Head of caudate nucleus (tissue), 42 donors: ENCODE measurements at regions of chr2 and their contacts with region 1.

Region 1: GRCh38 chr2:168346725-168347477 is 99.5 kb upstream of the STK39 start:
- DNase-seq: peak; percentile 24 to 92 (median 76)

Region 2: GRCh38 chr2:168573128-168573903 is 226.4 kb after region 1 on chr2:
- intact Hi-C with region 1: no loop called
- DNase-seq: no peak

Region 3: GRCh38 chr2:168758970-168759820 is 412.3 kb after region 1 on chr2:
- intact Hi-C with region 1: loop called (anchors 5 kb)
- DNase-seq: peak in 8 of 42 donors; percentile 6 to 43 (median 17)